ENCODE measurements at regions of chr7 and their contacts with region 1.

Region 1: DNA sequence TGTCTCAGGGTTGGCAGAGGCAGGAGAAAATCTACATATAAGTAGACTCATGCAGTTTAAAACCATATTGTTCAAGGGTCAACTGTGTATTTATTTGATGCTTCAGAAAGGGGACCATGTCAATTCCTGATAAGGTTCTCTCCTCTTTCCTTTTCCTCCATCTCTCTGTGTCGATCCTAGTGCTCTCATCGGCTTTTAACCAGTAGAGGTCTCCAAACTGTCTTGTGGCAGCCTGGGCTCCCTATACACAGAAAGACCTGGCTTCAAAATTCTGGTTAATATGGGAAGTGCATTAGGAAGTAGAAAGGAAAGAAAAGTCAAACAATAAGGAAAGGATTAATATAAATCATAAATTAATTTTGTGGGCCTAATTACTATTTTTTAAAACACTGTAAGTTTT is 304.4 kb upstream of the C7orf33 start:
- DNase-seq: no peak
- ATAC-seq: no peak
- H3K4me3 ChIP-seq: no peak overlapping the region
- H3K27ac ChIP-seq: no peak overlapping the region
- H3K4me1 ChIP-seq: no peaks in the 10 kb centered on the region
- H3K27me3 ChIP-seq: peaks cover 0 to 4% (median 0%) of the 10 kb centered on the region in 9 donors
- CTCF ChIP-seq: peak in 6 of 12 donors; percentile 12 to 54 (median 33)
- POLR2A ChIP-seq: no peak

Region 2: GRCh38 chr7:148472406-148472805 is 186.3 kb after region 1 on chr7:
- intact Hi-C with region 1: loop called in 1 of 10 experiments (anchors 10 kb)
- DNase-seq: no peak
- ATAC-seq: no peak
- H3K4me3 ChIP-seq: no peak overlapping the region
- H3K27ac ChIP-seq: no peak overlapping the region
- H3K4me1 ChIP-seq: no peaks in the 10 kb centered on the region
- H3K27me3 ChIP-seq: peaks cover 0 to 9% (median 0%) of the 10 kb centered on the region in 9 donors
- CTCF ChIP-seq: no peak
- POLR2A ChIP-seq: no peak

Region 3: GRCh38 chr7:148485618-148486017 is 199.5 kb after region 1 on chr7:
- intact Hi-C with region 1: loop called in 2 of 10 experiments (anchors 10 kb)
- DNase-seq: no peak
- ATAC-seq: no peak
- H3K4me3 ChIP-seq: no peak overlapping the region
- H3K27ac ChIP-seq: no peak overlapping the region
- H3K4me1 ChIP-seq: peaks cover 0 to 6% (median 0%) of the 10 kb centered on the region in 12 donors
- H3K27me3 ChIP-seq: peaks cover 0 to 5% (median 0%) of the 10 kb centered on the region in 9 donors
- CTCF ChIP-seq: peak in 1 of 12 donors; percentile 7
- POLR2A ChIP-seq: no peak

Region 4: GRCh38 chr7:148884299-148885022 is 598.3 kb after region 1 on chr7:
- intact Hi-C with region 1: no loop called
- DNase-seq: peak; percentile 93 to 97 (median 94)
- ATAC-seq: peak; percentile 98 to 100 (median 99)
- H3K4me3 ChIP-seq: peak overlapping the region; percentile 65 to 99 (median 93)
- H3K27ac ChIP-seq: peak overlapping the region; percentile 77 to 98 (median 92)
- H3K4me1 ChIP-seq: peaks cover 0 to 17% (median 4%) of the 10 kb centered on the region in 12 donors
- H3K27me3 ChIP-seq: no peaks in the 10 kb centered on the region
- CTCF ChIP-seq: no peak
- POLR2A ChIP-seq: peak in 1 of 2 donors; percentile 83